GM12878 (cell line): ENCODE measurements at regions of chr1 and their contacts with region 1.

Region 1: GRCh38 chr1:66446261-66447001 is 87.5 kb upstream of the SGIP1 start:
- DNase-seq: peak; percentile 63
- ATAC-seq: peak; percentile 73
- H3K4me3 ChIP-seq: no peak overlapping the region
- H3K27ac ChIP-seq: peak overlapping the region; percentile 98
- H3K4me1 ChIP-seq: peaks cover 12% of the 10 kb centered on the region
- H3K27me3 ChIP-seq: no peaks in the 10 kb centered on the region
- CTCF ChIP-seq: peak; percentile 71 to 84 (median 78); a peak in 5 of 6 replicates
- EP300 ChIP-seq: no peak
- POLR2A ChIP-seq: no peak
- RAD21 ChIP-seq: peak; percentile 99

Region 2: GRCh38 chr1:65958561-65959350 is 487.7 kb before region 1 on chr1:
- CTCF ChIA-PET with region 1: interaction called, 60 read pairs
- POLR2A ChIA-PET with region 1: no interaction called
- RAD21 ChIA-PET with region 1: interaction called, 63 read pairs
- SMC1A ChIA-PET with region 1: interaction called, 52 read pairs
- in situ Hi-C with region 1: loop called (anchors 5 kb)
- intact Hi-C with region 1: loop called (anchors 1 kb)
- DNase-seq: peak; percentile 7
- ATAC-seq: peak; percentile 78
- H3K4me3 ChIP-seq: no peak overlapping the region
- H3K27ac ChIP-seq: no peak overlapping the region
- H3K4me1 ChIP-seq: no peaks in the 10 kb centered on the region
- H3K27me3 ChIP-seq: peaks cover 0 to 2% of the 10 kb centered on the region in 2 experiments; a peak in 1 of 4 replicates
- CTCF ChIP-seq: peak; percentile 42 to 73 (median 46); a peak in 5 of 6 replicates
- EP300 ChIP-seq: no peak
- POLR2A ChIP-seq: no peak
- RAD21 ChIP-seq: peak; percentile 95

Region 3: GRCh38 chr1:66271216-66271903 is 175.1 kb before region 1 on chr1:
- CTCF ChIA-PET with region 1: interaction called, 41 read pairs
- POLR2A ChIA-PET with region 1: no interaction called
- RAD21 ChIA-PET with region 1: interaction called, 36 read pairs
- SMC1A ChIA-PET with region 1: interaction called, 29 read pairs
- in situ Hi-C with region 1: no loop called
- intact Hi-C with region 1: no loop called
- DNase-seq: no peak
- ATAC-seq: peak; percentile 58
- H3K4me3 ChIP-seq: no peak overlapping the region
- H3K27ac ChIP-seq: no peak overlapping the region
- H3K4me1 ChIP-seq: peaks cover 21% of the 10 kb centered on the region
- H3K27me3 ChIP-seq: no peaks in the 10 kb centered on the region
- CTCF ChIP-seq: no peak
- EP300 ChIP-seq: peak; percentile 38 to 77; a peak in 1 of 4 replicates
- POLR2A ChIP-seq: no peak
- RAD21 ChIP-seq: no peak

Region 4: GRCh38 chr1:66339944-66340343 is 106.5 kb before region 1 on chr1:
- CTCF ChIA-PET with region 1: interaction called, 150 read pairs
- POLR2A ChIA-PET with region 1: interaction called, 3 read pairs
- RAD21 ChIA-PET with region 1: interaction called, 165 read pairs
- SMC1A ChIA-PET with region 1: interaction called, 80 read pairs
- in situ Hi-C with region 1: no loop called
- intact Hi-C with region 1: loop called (anchors 2 kb)
- DNase-seq: no peak
- ATAC-seq: peak; percentile 8
- H3K4me3 ChIP-seq: peak overlapping the region; percentile 42
- H3K27ac ChIP-seq: peak overlapping the region; percentile 83
- H3K4me1 ChIP-seq: peaks cover 21% of the 10 kb centered on the region
- H3K27me3 ChIP-seq: no peaks in the 10 kb centered on the region
- CTCF ChIP-seq: no peak
- EP300 ChIP-seq: no peak
- POLR2A ChIP-seq: no peak
- RAD21 ChIP-seq: no peak

Region 5: DNA sequence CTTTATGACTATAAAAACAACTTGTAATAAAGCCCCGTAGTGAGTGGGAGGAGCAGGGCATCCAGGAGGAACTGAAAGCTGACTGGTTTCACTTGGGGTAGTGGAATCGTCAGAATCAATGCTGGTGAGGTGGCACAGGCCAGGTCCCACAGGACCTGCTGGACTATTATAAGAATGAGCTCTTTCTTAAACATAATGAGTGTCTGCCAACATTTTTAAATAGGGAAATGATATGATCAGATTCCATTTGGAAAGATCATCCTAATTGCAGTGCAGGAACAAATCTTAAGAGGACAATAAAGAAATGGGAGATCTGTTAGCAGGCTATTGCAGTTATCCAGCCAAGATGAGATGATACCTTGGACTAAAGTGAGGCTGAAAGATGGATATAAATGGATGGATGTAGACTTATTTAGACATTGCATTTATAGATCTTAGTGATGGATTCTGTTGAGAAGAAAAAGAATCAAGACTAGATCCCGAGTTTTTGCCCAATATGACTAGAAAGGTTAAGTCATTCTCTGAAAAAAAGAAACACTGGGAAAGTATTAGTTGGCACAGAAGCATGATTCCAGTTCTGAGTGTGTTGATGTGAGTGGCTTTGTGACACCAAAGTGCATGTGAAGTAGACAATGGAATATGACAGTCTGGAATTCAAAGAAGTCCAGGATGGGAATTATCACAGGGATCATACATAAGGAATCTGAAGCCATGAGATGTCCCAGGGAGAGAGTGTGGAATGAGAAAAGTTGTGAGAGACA is 65.8 kb before region 1 on chr1:
- CTCF ChIA-PET with region 1: interaction called, 396 read pairs
- POLR2A ChIA-PET with region 1: interaction called, 7 read pairs
- RAD21 ChIA-PET with region 1: interaction called, 163 read pairs
- SMC1A ChIA-PET with region 1: interaction called, 196 read pairs
- in situ Hi-C with region 1: no loop called
- intact Hi-C with region 1: no loop called
- DNase-seq: peak; percentile 87
- ATAC-seq: peak; percentile 95
- H3K4me3 ChIP-seq: peak overlapping the region; percentile 55
- H3K27ac ChIP-seq: peak overlapping the region; percentile 83
- H3K4me1 ChIP-seq: peaks cover 39% of the 10 kb centered on the region
- H3K27me3 ChIP-seq: no peaks in the 10 kb centered on the region
- CTCF ChIP-seq: no peak
- EP300 ChIP-seq: peak; percentile 99
- POLR2A ChIP-seq: no peak
- RAD21 ChIP-seq: no peak

Region 6: GRCh38 chr1:66413136-66413837 is 33.1 kb before region 1 on chr1:
- CTCF ChIA-PET with region 1: interaction called, 4 read pairs
- POLR2A ChIA-PET with region 1: no interaction called
- RAD21 ChIA-PET with region 1: interaction called, 6 read pairs
- SMC1A ChIA-PET with region 1: interaction called, 16 read pairs
- in situ Hi-C with region 1: no loop called
- intact Hi-C with region 1: no loop called
- DNase-seq: no peak
- ATAC-seq: peak; percentile 86
- H3K4me3 ChIP-seq: no peak overlapping the region
- H3K27ac ChIP-seq: no peak overlapping the region
- H3K4me1 ChIP-seq: no peaks in the 10 kb centered on the region; the same call in 1 of the 2 replicates
- H3K27me3 ChIP-seq: no peaks in the 10 kb centered on the region
- CTCF ChIP-seq: no peak
- EP300 ChIP-seq: no peak
- POLR2A ChIP-seq: no peak
- RAD21 ChIP-seq: no peak